PC-9 (cell line): ENCODE measurements at regions of chrX and their contacts with region 1.

Region 1: DNA sequence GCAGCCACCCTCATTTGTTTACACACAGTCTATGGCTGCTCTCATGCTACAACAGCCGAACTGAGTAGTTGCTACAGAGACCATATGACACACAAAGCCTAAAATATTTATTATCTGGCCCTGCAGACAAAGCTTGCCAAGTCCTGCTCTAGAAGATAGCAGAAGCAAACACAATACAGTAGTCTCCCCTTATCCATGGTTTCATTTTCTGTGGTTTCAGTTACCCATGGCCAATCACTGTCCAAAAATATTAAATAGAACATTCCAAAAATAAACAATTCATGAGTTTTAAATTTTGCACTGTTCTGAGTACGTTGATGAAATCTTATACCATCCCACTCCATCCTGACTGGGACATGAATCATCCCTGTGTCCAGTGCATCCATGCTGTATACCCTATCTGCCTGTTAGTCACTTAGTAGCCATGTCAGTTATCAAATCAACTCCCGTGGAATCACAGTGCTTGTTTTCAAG is 40.2 kb upstream of the ZNF81 start:
- DNase-seq: no peak
- H3K4me3 ChIP-seq: no peak overlapping the region
- H3K27ac ChIP-seq: no peak overlapping the region
- H3K4me1 ChIP-seq: no peaks in the 10 kb centered on the region
- H3K27me3 ChIP-seq: no peaks in the 10 kb centered on the region
- CTCF ChIP-seq: no peak

Region 2: GRCh38 chrX:47846040-47846439 is 49.6 kb after region 1 on chrX:
- CTCF ChIA-PET with region 1: no interaction called
- POLR2A ChIA-PET with region 1: interaction called, 12 read pairs
- intact Hi-C with region 1: no loop called
- DNase-seq: no peak
- H3K4me3 ChIP-seq: no peak overlapping the region
- H3K27ac ChIP-seq: no peak overlapping the region
- H3K4me1 ChIP-seq: no peaks in the 10 kb centered on the region
- H3K27me3 ChIP-seq: no peaks in the 10 kb centered on the region
- CTCF ChIP-seq: no peak

Region 3: DNA sequence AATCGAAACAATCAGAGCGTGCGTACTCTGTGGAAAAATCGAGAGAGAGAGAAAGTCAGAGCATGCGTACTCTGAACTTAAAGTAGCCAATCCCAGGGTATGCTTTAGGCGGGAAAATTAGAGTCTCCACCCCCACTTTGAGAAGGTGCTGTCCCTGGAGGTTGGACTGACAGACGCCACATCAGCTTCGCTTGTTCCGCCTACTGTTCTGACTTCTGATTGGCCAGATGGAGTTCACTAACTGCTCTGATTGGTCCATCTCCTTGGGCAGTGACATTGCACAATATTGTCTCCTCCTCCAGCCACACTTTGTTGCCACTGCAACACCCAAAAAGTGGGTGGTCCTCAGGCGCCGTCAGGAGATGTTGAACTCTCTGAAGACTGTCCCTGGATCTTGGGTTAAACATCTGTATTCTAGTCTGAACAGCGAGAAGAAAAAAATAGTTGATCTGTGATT is 400.3 kb after region 1 on chrX and contains the start of gene SSX5:
- CTCF ChIA-PET with region 1: no interaction called
- POLR2A ChIA-PET with region 1: no interaction called
- intact Hi-C with region 1: no loop called
- DNase-seq: no peak
- H3K4me3 ChIP-seq: no peak within 1 kb of the TSS
- H3K27ac ChIP-seq: no peak within 1 kb of the TSS
- H3K4me1 ChIP-seq: no peaks in the 10 kb centered on the region
- H3K27me3 ChIP-seq: no peaks in the 10 kb centered on the region
- CTCF ChIP-seq: no peak
- total RNA-seq, gene SSX5: not detected in 2 replicates